ENCODE measurements at regions of chr1 and their contacts with region 1.

Region 1: DNA sequence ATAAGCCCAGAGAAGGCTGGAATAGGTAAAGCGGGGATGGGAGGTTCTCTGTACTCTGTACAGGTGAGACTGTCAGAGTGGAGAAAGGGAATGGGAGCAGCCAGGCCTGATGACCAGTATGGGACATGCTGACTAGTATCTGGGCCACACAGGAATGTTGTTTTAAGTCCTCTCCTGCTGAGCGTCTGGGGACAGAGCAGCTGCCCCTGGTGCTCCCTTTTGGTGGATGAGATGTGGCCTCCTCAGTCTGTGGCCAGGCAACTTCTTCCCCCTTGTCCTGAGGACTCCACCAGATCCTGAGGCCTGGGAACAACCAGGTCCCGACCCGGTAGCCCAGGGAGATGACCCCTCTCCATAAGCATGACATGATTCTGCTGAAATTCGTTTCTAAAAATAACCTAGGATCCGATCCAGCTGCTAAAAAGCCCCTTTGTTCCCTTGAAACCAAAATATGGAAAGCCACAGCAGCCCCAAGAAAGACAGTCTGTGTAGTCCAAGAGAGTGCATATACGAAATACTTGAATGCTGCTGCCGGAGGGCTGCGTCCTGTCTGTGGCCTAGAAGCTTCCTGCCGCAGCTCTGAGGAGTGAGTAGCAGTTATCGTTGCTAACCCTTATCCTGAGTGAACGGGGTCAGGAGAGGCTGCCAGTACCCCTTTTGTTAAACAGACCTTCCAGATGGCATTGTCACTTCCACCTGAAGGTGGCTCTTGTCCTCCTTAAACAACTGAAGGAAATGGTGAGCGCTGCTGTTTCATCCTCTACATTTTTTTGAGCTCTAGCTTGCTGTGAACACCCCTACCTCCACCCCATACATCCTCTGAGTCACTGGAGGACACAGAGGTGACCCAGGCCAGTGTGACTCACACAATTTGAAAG is 47.2 kb downstream of the ATP2B4 start:
- DNase-seq: peak; percentile 81
- ATAC-seq: peak; percentile 93
- H3K4me3 Mint-ChIP-seq: peak overlapping the region; percentile 77
- H3K27ac Mint-ChIP-seq: peak overlapping the region; percentile 94
- H3K4me1 Mint-ChIP-seq: peaks cover 45% of the 10 kb centered on the region
- H3K27me3 Mint-ChIP-seq: no peaks in the 10 kb centered on the region

Region 2: GRCh38 chr1:203652724-203653461 is 20.9 kb before region 1 on chr1:
- POLR2A ChIA-PET with region 1: interaction called, 21 read pairs
- DNase-seq: no peak
- ATAC-seq: peak; percentile 53
- H3K4me3 Mint-ChIP-seq: peak overlapping the region; percentile 60
- H3K27ac Mint-ChIP-seq: peak overlapping the region; percentile 90
- H3K4me1 Mint-ChIP-seq: peaks cover 51% of the 10 kb centered on the region
- H3K27me3 Mint-ChIP-seq: peaks cover 3% of the 10 kb centered on the region

Region 3: DNA sequence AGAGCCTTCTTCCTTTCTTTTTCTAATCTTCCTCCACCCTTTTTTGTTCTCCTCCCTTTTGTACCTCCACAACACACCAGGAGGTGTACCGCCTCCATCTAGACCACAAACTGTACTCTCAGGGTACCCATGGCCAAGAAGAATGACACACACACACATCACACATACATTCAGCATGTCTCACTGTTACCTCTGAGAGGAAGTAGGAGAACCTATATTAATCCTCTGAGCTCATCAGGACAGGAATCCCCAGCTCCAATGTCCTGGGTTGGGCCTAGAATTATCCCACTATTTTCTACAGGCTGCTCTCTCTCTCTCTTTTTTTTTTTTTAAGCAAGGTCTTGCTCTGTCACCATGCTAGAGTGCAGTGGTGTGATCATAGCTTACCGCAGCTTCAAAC is 10.5 kb before region 1 on chr1:
- POLR2A ChIA-PET with region 1: interaction called, 15 read pairs
- DNase-seq: no peak
- ATAC-seq: peak; percentile 57
- H3K4me3 Mint-ChIP-seq: peak overlapping the region; percentile 46
- H3K27ac Mint-ChIP-seq: peak overlapping the region; percentile 26
- H3K4me1 Mint-ChIP-seq: peaks cover 46% of the 10 kb centered on the region
- H3K27me3 Mint-ChIP-seq: no peaks in the 10 kb centered on the region

Region 4: GRCh38 chr1:203726417-203726867 is 52.7 kb after region 1 on chr1:
- POLR2A ChIA-PET with region 1: no interaction called
- DNase-seq: no peak
- ATAC-seq: no peak
- H3K4me3 Mint-ChIP-seq: no peak overlapping the region
- H3K27ac Mint-ChIP-seq: no peak overlapping the region
- H3K4me1 Mint-ChIP-seq: no peaks in the 10 kb centered on the region
- H3K27me3 Mint-ChIP-seq: no peaks in the 10 kb centered on the region

Measured in activated naive CD8-positive, alpha-beta T cell treated with anti-CD3 and anti-CD28 coated beads, Interleukin-2, amount 10 ng/mL, durations not matched to agents 7 days and 5 days (primary cell).